ENCODE measurements at regions of chrX and their contacts with region 1.

Region 1: DNA sequence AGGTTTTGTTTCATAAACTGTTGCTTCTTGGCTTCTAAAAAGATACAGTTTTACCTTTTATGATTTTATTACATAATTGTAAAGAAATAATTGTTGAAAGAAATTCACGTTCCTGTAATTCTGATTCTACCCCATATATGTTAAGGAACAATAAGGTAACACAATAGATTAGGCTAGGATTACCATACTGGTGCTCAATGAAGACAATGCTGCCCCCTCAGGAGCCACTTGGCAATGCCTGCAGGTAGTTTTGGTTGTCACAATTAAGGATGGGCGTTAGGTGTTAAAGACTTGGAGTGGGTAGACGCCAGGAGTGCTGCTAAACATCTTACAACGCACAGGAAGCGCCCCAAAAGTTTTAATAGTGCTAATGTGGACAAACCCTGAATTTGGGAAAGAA is 133.2 kb downstream of the NLGN4X start:
- DNase-seq: peak; percentile 16
- H3K4me3 ChIP-seq: no peak overlapping the region
- H3K27ac ChIP-seq: no peak overlapping the region
- H3K4me1 ChIP-seq: peaks cover 8% of the 10 kb centered on the region
- H3K27me3 ChIP-seq: no peaks in the 10 kb centered on the region
- CTCF ChIP-seq: peak; percentile 50

Region 2: DNA sequence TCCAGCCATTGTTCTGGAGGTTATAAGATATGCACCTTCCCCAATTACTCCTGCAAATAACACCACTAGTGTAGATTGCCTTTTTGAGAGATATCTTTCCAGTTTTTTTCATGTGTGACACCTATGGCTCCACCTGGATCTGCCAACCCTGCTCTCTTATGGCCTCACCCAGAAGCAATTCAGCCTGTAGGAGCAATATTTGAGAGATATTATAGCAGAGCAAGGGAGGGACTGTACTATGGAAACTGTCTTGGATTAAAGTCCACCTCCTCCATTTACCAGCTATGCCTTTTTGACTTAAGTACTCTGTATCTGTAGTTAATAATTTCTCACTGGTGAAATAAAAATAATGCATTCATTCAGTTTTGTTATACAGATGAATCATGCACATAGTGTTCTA is 670.4 kb before region 1 on chrX:
- CTCF ChIA-PET with region 1: interaction called, 13 read pairs
- POLR2A ChIA-PET with region 1: no interaction called
- intact Hi-C with region 1: no loop called
- DNase-seq: no peak
- H3K4me3 ChIP-seq: no peak overlapping the region
- H3K27ac ChIP-seq: no peak overlapping the region
- H3K4me1 ChIP-seq: no peaks in the 10 kb centered on the region
- H3K27me3 ChIP-seq: no peaks in the 10 kb centered on the region
- CTCF ChIP-seq: no peak

Region 3: GRCh38 chrX:6169407-6169806 is 73.9 kb after region 1 on chrX:
- CTCF ChIA-PET with region 1: no interaction called
- POLR2A ChIA-PET with region 1: no interaction called
- intact Hi-C with region 1: no loop called
- DNase-seq: no peak
- H3K4me3 ChIP-seq: no peak overlapping the region
- H3K27ac ChIP-seq: no peak overlapping the region
- H3K4me1 ChIP-seq: peaks cover 17% of the 10 kb centered on the region
- H3K27me3 ChIP-seq: no peaks in the 10 kb centered on the region
- CTCF ChIP-seq: no peak